Stomach (tissue), 19 donors: ENCODE measurements at regions of chr4 and their contacts with region 1.

Region 1: DNA sequence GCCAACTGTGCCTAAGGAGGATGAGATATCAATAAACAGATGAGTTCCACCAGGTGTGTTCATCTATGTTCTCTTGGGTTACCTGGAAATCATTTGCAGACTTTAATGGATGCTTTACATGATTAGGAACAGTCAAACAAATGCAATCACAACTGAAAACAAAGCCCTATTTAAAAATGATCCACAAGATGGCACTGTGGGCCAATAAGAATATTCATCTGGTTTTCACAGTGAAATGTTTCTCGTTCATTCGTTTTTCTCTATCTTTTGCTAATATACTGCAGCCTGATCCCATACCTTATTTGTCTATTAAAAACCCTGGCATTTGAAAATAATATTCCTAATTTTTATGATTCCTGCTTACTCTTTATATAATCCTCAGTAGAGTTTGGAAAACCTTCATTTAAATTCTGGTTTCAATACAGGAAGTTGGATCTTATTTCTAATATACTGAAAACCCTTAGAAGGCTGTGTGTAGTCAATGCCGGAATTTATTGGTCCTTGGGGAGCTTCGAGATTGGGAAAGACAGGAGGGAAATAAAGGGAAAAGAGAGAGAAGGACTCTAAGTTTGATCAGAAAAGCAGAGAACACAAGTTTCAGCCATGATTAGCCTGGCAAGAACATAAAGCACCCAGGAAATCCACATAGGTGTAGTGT is 63.8 kb upstream of the TAPT1 start:
- DNase-seq: peak in 1 of 2 donors; percentile 75
- H3K4me3 ChIP-seq: peak overlapping the region in 1 of 4 donors; percentile 3
- H3K27ac ChIP-seq: no peak overlapping the region
- H3K4me1 ChIP-seq: peaks cover 0 to 8% (median 4%) of the 10 kb centered on the region in 4 donors
- H3K27me3 ChIP-seq: no peaks in the 10 kb centered on the region
- CTCF ChIP-seq: peak in 5 of 7 experiments; percentile 21 to 65 (median 54)
- EP300 ChIP-seq: no peak
- POLR2A ChIP-seq: no peak

Region 2: GRCh38 chr4:16438986-16439385 is 149.0 kb after region 1 on chr4:
- intact Hi-C with region 1: loop called (anchors 10 kb)
- DNase-seq: peak in 1 of 2 donors; percentile 8
- H3K4me3 ChIP-seq: no peak overlapping the region
- H3K27ac ChIP-seq: no peak overlapping the region
- H3K4me1 ChIP-seq: no peaks in the 10 kb centered on the region
- H3K27me3 ChIP-seq: no peaks in the 10 kb centered on the region
- CTCF ChIP-seq: no peak
- EP300 ChIP-seq: no peak
- POLR2A ChIP-seq: no peak

Region 3: DNA sequence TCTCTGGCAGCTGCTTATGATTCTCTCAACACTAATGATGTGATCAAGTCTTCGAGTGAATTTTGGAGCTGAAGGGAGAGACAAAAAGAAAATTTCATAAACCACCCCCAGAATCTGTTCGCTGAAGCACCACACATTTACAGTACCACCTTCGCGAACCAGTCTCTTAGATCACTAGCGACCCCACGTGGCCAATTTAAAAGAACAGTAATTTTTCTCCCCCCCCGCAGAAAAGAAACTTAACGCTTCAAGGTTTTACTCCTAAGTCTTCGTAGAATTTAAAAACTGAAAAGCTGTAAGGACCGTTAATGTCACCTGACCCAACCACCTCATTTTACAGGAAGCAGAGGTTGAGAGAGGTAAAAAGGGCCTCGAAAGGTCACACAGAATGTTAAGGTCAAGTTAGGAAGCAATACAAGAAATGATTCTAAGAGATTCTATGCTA is 1034.4 kb after region 1 on chr4:
- intact Hi-C with region 1: loop called (anchors 10 kb)
- DNase-seq: peak in 1 of 2 donors; percentile 81
- H3K4me3 ChIP-seq: no peak overlapping the region
- H3K27ac ChIP-seq: no peak overlapping the region
- H3K4me1 ChIP-seq: peaks cover 0 to 17% (median 9%) of the 10 kb centered on the region in 4 donors
- H3K27me3 ChIP-seq: no peaks in the 10 kb centered on the region
- CTCF ChIP-seq: peak in 5 of 7 experiments; percentile 17 to 62 (median 47)
- EP300 ChIP-seq: no peak
- POLR2A ChIP-seq: no peak

Region 4: DNA sequence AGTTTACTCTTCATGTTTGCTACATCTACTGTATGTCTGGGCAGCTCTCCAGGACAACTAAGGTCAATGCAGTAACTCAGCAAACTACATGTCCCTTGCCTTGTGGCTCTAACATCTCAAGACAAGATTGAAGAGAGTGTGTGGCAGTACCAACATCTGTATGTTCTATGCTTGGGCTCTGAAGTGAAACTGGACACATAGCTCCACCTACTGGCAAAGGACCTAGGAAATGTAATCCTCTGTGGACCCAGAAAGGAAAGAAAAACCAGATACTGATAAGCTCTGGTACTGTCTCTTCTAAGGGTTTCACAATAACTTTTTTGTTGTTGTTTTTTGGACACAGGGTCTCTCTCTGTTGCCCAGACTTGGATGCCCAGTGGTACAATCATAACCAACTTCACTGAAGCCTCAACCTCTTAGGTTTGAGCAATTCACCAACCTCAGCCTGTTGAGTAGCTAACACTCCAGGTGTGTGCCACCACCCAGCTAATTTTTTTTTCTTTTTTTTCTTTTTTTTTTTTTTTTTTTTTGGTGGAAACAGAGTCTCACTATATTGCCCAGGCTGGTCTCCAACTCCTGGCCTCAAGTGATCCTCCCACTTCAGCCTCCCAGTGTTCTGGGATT is 1157.8 kb after region 1 on chr4:
- intact Hi-C with region 1: loop called (anchors 10 kb)
- DNase-seq: peak; percentile 33 to 88
- H3K4me3 ChIP-seq: no peak overlapping the region
- H3K27ac ChIP-seq: no peak overlapping the region
- H3K4me1 ChIP-seq: no peaks in the 10 kb centered on the region
- H3K27me3 ChIP-seq: no peaks in the 10 kb centered on the region
- CTCF ChIP-seq: peak in 4 of 7 experiments; percentile 37 to 55 (median 46)
- EP300 ChIP-seq: no peak
- POLR2A ChIP-seq: no peak